ENCODE measurements at regions of chr4 and their contacts with region 1.

Region 1: DNA sequence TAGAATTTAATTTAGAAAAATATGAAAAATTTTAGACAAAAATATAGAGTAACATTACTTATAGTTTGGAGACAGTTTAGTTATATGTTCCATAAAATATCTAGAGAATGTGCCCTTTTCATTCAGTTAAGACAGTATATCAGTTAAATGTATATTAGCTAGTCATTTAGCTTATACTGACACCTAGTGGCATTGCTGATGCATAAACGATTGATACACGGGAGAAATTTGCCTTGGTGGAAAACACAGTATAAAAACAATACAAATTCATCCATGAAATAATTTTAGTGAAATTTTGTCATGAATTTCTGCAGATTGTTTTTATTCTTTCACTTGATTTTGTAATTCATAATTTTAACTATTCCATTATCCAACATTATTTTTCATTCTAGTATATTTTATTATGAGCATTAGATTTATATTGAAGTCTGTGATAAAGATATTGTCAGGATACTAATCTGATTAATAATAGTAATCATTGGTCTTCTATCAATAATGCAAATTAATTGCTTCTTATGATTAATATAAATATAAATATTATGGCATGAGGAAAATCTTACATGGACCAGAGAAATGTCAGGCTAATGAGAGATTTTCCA is 219.0 kb downstream of the TLL1 start:
- DNase-seq: no peak
- H3K4me3 Mint-ChIP-seq: no peak overlapping the region
- H3K27ac Mint-ChIP-seq: no peak overlapping the region
- H3K4me1 Mint-ChIP-seq: peaks cover 11% of the 10 kb centered on the region
- H3K27me3 Mint-ChIP-seq: no peaks in the 10 kb centered on the region
- CTCF ChIP-seq: peak; percentile 22

Region 2: DNA sequence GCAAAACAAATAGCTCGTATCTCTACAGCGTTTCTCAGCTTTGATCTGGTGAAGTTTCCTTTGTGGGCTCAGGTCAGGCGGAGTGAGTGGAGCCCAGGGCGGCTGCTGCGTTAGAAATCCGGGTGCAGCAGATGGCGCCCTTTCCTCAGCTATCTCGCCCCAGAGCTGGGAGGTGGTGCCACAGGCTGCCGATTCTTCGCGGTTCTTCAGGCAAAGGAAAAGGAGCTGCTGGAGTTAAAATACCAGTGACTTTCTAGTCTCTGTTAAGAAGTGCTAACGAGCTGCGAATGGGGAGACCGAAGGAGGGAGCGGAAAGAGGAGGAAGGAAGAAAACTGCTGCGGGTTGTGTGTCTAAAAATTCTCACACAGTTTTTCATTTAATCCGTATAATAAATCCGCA is 598.7 kb before region 1 on chr4:
- CTCF ChIA-PET with region 1: interaction called, 10 read pairs
- intact Hi-C with region 1: loop called (anchors 2 kb)
- DNase-seq: peak; percentile 73
- H3K4me3 Mint-ChIP-seq: peak overlapping the region; percentile 58
- H3K27ac Mint-ChIP-seq: no peak overlapping the region
- H3K4me1 Mint-ChIP-seq: peaks cover 8% of the 10 kb centered on the region
- H3K27me3 Mint-ChIP-seq: no peaks in the 10 kb centered on the region
- CTCF ChIP-seq: peak; percentile 56

Region 3: GRCh38 chr4:165864271-165864670 is 227.7 kb before region 1 on chr4:
- CTCF ChIA-PET with region 1: no interaction called
- intact Hi-C with region 1: loop called (anchors 5 kb)
- DNase-seq: no peak
- H3K4me3 Mint-ChIP-seq: no peak overlapping the region
- H3K27ac Mint-ChIP-seq: no peak overlapping the region
- H3K4me1 Mint-ChIP-seq: no peaks in the 10 kb centered on the region
- H3K27me3 Mint-ChIP-seq: no peaks in the 10 kb centered on the region
- CTCF ChIP-seq: no peak

Region 4: GRCh38 chr4:166003811-166004210 is 88.2 kb before region 1 on chr4:
- CTCF ChIA-PET with region 1: no interaction called
- intact Hi-C with region 1: no loop called
- DNase-seq: no peak
- H3K4me3 Mint-ChIP-seq: no peak overlapping the region
- H3K27ac Mint-ChIP-seq: no peak overlapping the region
- H3K4me1 Mint-ChIP-seq: no peaks in the 10 kb centered on the region
- H3K27me3 Mint-ChIP-seq: no peaks in the 10 kb centered on the region
- CTCF ChIP-seq: no peak

Region 5: DNA sequence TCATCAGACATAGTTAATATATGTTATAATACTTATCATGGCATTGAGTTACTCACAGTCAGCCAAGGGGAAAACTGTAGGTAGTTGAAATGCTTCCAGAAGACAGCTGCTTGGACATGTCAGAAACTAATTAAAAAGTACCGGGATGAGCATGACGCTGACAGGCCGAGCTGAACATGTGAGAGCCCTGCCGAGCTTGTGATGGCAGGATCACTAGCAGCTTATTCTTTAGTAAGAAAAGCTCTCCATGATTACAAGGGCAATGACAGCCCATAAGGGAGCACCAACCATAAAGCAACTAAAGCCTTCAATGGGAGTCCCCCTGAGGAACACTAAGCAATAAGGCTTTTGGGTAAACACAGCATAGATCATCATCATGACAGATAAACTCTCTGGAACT is 216.6 kb after region 1 on chr4:
- CTCF ChIA-PET with region 1: no interaction called
- intact Hi-C with region 1: no loop called
- DNase-seq: no peak
- H3K4me3 Mint-ChIP-seq: no peak overlapping the region
- H3K27ac Mint-ChIP-seq: no peak overlapping the region
- H3K4me1 Mint-ChIP-seq: no peaks in the 10 kb centered on the region
- H3K27me3 Mint-ChIP-seq: no peaks in the 10 kb centered on the region
- CTCF ChIP-seq: no peak

Measured in Calu3 (cell line).